ENCODE measurements at regions of chr11 and their contacts with region 1.

Region 1: GRCh38 chr11:60265373-60266214 is 14.9 kb upstream of the MS4A4A start:
- DNase-seq: peak; percentile 76
- ATAC-seq: peak; percentile 43
- H3K4me3 ChIP-seq: no peak overlapping the region
- H3K4me3 Mint-ChIP-seq: no peak overlapping the region
- H3K27ac ChIP-seq: no peak overlapping the region
- H3K27ac Mint-ChIP-seq: no peak overlapping the region
- H3K4me1 ChIP-seq: no peaks in the 10 kb centered on the region
- H3K4me1 Mint-ChIP-seq: peaks cover 4% of the 10 kb centered on the region
- H3K27me3 ChIP-seq: no peaks in the 10 kb centered on the region
- H3K27me3 Mint-ChIP-seq: no peaks in the 10 kb centered on the region
- CTCF ChIP-seq: peak; percentile 98

Region 2: DNA sequence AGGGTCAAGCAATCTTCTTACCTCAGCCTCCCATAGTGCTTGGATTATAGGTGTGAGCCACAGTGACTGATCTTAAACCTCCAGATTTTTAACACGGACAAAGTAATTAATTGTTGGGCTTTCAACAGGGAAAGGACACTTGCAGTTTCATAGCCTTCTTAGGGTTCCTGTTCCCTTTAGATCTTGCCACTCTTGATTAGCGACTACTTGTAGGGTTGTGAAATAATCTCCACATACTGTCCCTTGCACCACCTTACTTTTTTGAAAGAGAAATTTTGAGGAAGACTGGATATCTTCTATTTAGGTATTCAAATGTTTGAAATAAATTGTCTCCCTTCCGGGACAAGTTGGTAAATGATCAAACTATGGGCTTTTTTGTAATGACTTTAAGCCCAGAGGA is 30.3 kb before region 1 on chr11:
- CTCF ChIA-PET with region 1: no interaction called
- POLR2A ChIA-PET with region 1: no interaction called
- intact Hi-C with region 1: no loop called
- DNase-seq: no peak
- ATAC-seq: no peak
- H3K4me3 ChIP-seq: no peak overlapping the region
- H3K4me3 Mint-ChIP-seq: no peak overlapping the region
- H3K27ac ChIP-seq: no peak overlapping the region
- H3K27ac Mint-ChIP-seq: no peak overlapping the region
- H3K4me1 ChIP-seq: no peaks in the 10 kb centered on the region
- H3K4me1 Mint-ChIP-seq: no peaks in the 10 kb centered on the region
- H3K27me3 ChIP-seq: no peaks in the 10 kb centered on the region
- H3K27me3 Mint-ChIP-seq: peaks cover 5% of the 10 kb centered on the region
- CTCF ChIP-seq: no peak

Region 3: GRCh38 chr11:60334005-60334620 is 68.5 kb after region 1 on chr11:
- CTCF ChIA-PET with region 1: interaction called, 37 read pairs
- POLR2A ChIA-PET with region 1: no interaction called
- intact Hi-C with region 1: loop called (anchors 1 kb)
- DNase-seq: peak; percentile 85
- ATAC-seq: peak; percentile 96
- H3K4me3 ChIP-seq: no peak overlapping the region
- H3K4me3 Mint-ChIP-seq: no peak overlapping the region
- H3K27ac ChIP-seq: no peak overlapping the region
- H3K27ac Mint-ChIP-seq: no peak overlapping the region
- H3K4me1 ChIP-seq: peaks cover 9 to 12% of the 10 kb centered on the region in 2 donors
- H3K4me1 Mint-ChIP-seq: peaks cover 13% of the 10 kb centered on the region
- H3K27me3 ChIP-seq: no peaks in the 10 kb centered on the region
- H3K27me3 Mint-ChIP-seq: no peaks in the 10 kb centered on the region
- CTCF ChIP-seq: peak; percentile 91

Region 4: DNA sequence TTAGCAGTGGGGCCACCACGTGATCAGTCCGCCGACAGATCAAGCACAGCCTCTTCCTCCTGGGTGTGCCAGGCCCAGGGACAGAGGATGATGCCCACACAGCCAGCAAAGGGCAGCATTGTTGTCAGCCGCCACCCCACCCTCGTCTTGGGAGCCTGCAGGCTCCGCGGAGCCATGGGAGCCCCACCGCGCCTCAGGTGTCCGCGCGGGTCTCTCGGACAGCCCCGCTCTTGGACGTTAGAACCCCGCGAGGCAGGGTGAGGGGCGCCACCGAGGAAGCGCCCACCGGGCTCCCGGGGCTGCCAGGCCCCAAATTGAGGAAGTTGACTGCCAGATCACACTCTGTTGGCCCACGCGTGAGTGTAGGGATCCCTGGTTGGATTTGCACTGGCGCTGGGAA is 349.9 kb after region 1 on chr11:
- CTCF ChIA-PET with region 1: interaction called, 51 read pairs
- POLR2A ChIA-PET with region 1: no interaction called
- intact Hi-C with region 1: loop called (anchors 1 kb)
- DNase-seq: no peak
- ATAC-seq: no peak
- H3K4me3 ChIP-seq: no peak overlapping the region
- H3K4me3 Mint-ChIP-seq: no peak overlapping the region
- H3K27ac ChIP-seq: no peak overlapping the region
- H3K27ac Mint-ChIP-seq: no peak overlapping the region
- H3K4me1 ChIP-seq: peaks cover 0 to 7% of the 10 kb centered on the region in 2 donors
- H3K4me1 Mint-ChIP-seq: peaks cover 7% of the 10 kb centered on the region
- H3K27me3 ChIP-seq: no peaks in the 10 kb centered on the region
- H3K27me3 Mint-ChIP-seq: peaks cover 8% of the 10 kb centered on the region
- CTCF ChIP-seq: no peak

Region 5: GRCh38 chr11:60634126-60634525 is 368.5 kb after region 1 on chr11:
- CTCF ChIA-PET with region 1: interaction called, 40 read pairs
- POLR2A ChIA-PET with region 1: no interaction called
- intact Hi-C with region 1: no loop called
- DNase-seq: peak; percentile 60
- ATAC-seq: peak; percentile 40
- H3K4me3 ChIP-seq: no peak overlapping the region
- H3K4me3 Mint-ChIP-seq: peak overlapping the region; percentile 61
- H3K27ac ChIP-seq: no peak overlapping the region
- H3K27ac Mint-ChIP-seq: peak overlapping the region; percentile 2
- H3K4me1 ChIP-seq: peaks cover 32 to 34% of the 10 kb centered on the region in 2 donors
- H3K4me1 Mint-ChIP-seq: peaks cover 34% of the 10 kb centered on the region
- H3K27me3 ChIP-seq: no peaks in the 10 kb centered on the region
- H3K27me3 Mint-ChIP-seq: peaks cover 15% of the 10 kb centered on the region
- CTCF ChIP-seq: peak; percentile 60

Region 6: GRCh38 chr11:60775420-60775961 is 509.9 kb after region 1 on chr11:
- CTCF ChIA-PET with region 1: interaction called, 6 read pairs
- POLR2A ChIA-PET with region 1: no interaction called
- intact Hi-C with region 1: loop called (anchors 1 kb)
- DNase-seq: peak; percentile 89
- ATAC-seq: peak; percentile 96
- H3K4me3 ChIP-seq: no peak overlapping the region
- H3K4me3 Mint-ChIP-seq: no peak overlapping the region
- H3K27ac ChIP-seq: no peak overlapping the region
- H3K27ac Mint-ChIP-seq: peak overlapping the region; percentile 1
- H3K4me1 ChIP-seq: peaks cover 3 to 11% of the 10 kb centered on the region in 2 donors
- H3K4me1 Mint-ChIP-seq: peaks cover 15% of the 10 kb centered on the region
- H3K27me3 ChIP-seq: peaks cover 0 to 9% (median 1%) of the 10 kb centered on the region in 4 experiments
- H3K27me3 Mint-ChIP-seq: peaks cover 12% of the 10 kb centered on the region
- CTCF ChIP-seq: peak; percentile 88